Endothelial cell of umbilical vein (primary cell): ENCODE measurements at regions of chr1 and their contacts with region 1.

Region 1: DNA sequence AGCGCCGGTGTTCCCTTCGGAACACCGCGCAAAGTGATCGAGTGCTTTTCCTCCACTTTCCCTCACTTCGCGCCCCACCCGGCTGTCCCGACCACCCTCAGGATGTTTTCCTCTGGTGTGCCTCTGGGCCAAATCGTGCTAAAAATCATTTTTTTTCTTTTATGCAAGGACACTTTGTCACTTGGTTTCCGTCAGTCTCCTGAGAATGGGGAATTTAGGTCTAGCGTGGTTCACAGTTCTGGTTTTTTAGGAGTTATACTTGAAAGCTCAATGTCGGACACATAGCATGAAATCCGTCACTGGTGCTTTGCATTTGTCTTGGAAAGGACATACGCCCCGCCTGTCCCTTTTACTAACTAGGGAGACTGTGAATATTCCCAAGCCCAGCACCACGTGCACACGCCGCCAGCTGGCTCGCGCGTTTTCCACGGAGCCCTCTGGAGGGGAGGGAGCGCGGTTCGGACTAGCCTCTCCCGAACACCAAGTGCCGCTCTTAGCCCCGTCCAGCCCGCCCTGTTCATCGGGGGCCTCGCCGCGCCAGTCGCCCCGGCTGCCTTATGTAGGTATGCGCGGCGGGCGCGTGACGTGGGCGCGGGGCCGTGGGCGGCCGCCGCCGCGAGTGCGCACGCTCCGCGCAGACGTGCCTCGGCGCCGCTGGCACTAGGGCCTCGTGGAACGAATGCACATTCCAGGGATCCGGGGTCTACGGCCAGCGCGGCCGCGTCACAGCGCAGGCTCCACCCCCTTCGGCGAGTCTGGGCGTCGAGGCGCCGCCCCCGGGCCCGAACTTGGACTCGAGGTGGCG is 572 bp upstream of the IRF2BP2 start:
- DNase-seq: peak; percentile 95
- H3K4me3 ChIP-seq: peak overlapping the region; percentile 17 to 78 (median 57)
- H3K27ac ChIP-seq: peak overlapping the region; percentile 99
- H3K4me1 ChIP-seq: peaks cover 37% of the 10 kb centered on the region
- H3K27me3 ChIP-seq: no peaks in the 10 kb centered on the region
- CTCF ChIP-seq: peak in 1 of 2 donors; percentile 14
- POLR2A ChIP-seq: peak; percentile 10

Region 2: GRCh38 chr1:234599617-234600417 is 10.7 kb before region 1 on chr1:
- CTCF ChIA-PET with region 1: interaction called, 14 read pairs
- POLR2A ChIA-PET with region 1: no interaction called
- dilution Hi-C with region 1: no loop called
- intact Hi-C with region 1: loop called (anchors 1 kb)
- DNase-seq: peak; percentile 92
- H3K4me3 ChIP-seq: peak overlapping the region; percentile 18 to 53 (median 32)
- H3K27ac ChIP-seq: peak overlapping the region; percentile 87
- H3K4me1 ChIP-seq: peaks cover 50% of the 10 kb centered on the region
- H3K27me3 ChIP-seq: no peaks in the 10 kb centered on the region
- CTCF ChIP-seq: peak in 1 of 2 donors; percentile 3
- POLR2A ChIP-seq: no peak

Region 3: GRCh38 chr1:234656856-234657654 is 46.5 kb after region 1 on chr1:
- CTCF ChIA-PET with region 1: interaction called, 4 read pairs
- POLR2A ChIA-PET with region 1: interaction called, 3 read pairs
- dilution Hi-C with region 1: no loop called
- intact Hi-C with region 1: loop called (anchors 1 kb)
- DNase-seq: peak; percentile 92
- H3K4me3 ChIP-seq: no peak overlapping the region
- H3K27ac ChIP-seq: peak overlapping the region; percentile 82
- H3K4me1 ChIP-seq: peaks cover 33% of the 10 kb centered on the region
- H3K27me3 ChIP-seq: no peaks in the 10 kb centered on the region
- CTCF ChIP-seq: no peak
- POLR2A ChIP-seq: no peak

Region 4: GRCh38 chr1:234772345-234773147 is 162.0 kb after region 1 on chr1:
- CTCF ChIA-PET with region 1: interaction called, 3 read pairs
- POLR2A ChIA-PET with region 1: no interaction called
- dilution Hi-C with region 1: no loop called
- intact Hi-C with region 1: loop called (anchors 1 kb)
- DNase-seq: peak; percentile 91
- H3K4me3 ChIP-seq: no peak overlapping the region
- H3K27ac ChIP-seq: peak overlapping the region; percentile 89
- H3K4me1 ChIP-seq: peaks cover 12% of the 10 kb centered on the region
- H3K27me3 ChIP-seq: peaks cover 2% of the 10 kb centered on the region in 2 experiments
- CTCF ChIP-seq: no peak
- POLR2A ChIP-seq: peak; percentile 62

Region 5: GRCh38 chr1:234893725-234894630 is 283.4 kb after region 1 on chr1:
- CTCF ChIA-PET with region 1: interaction called, 3 read pairs
- POLR2A ChIA-PET with region 1: no interaction called
- dilution Hi-C with region 1: no loop called
- intact Hi-C with region 1: loop called (anchors 1 kb)
- DNase-seq: peak; percentile 98
- H3K4me3 ChIP-seq: no peak overlapping the region
- H3K27ac ChIP-seq: peak overlapping the region; percentile 93
- H3K4me1 ChIP-seq: peaks cover 20% of the 10 kb centered on the region
- H3K27me3 ChIP-seq: no peaks in the 10 kb centered on the region
- CTCF ChIP-seq: no peak
- POLR2A ChIP-seq: no peak

Region 6: GRCh38 chr1:234978397-234979295 is 368.1 kb after region 1 on chr1:
- CTCF ChIA-PET with region 1: interaction called, 7 read pairs
- POLR2A ChIA-PET with region 1: no interaction called
- dilution Hi-C with region 1: loop called (anchors 25 kb)
- intact Hi-C with region 1: loop called (anchors 1 kb)
- DNase-seq: peak; percentile 86
- H3K4me3 ChIP-seq: no peak overlapping the region
- H3K27ac ChIP-seq: peak overlapping the region; percentile 88
- H3K4me1 ChIP-seq: peaks cover 69% of the 10 kb centered on the region
- H3K27me3 ChIP-seq: no peaks in the 10 kb centered on the region
- CTCF ChIP-seq: no peak
- POLR2A ChIP-seq: no peak

Region 7: DNA sequence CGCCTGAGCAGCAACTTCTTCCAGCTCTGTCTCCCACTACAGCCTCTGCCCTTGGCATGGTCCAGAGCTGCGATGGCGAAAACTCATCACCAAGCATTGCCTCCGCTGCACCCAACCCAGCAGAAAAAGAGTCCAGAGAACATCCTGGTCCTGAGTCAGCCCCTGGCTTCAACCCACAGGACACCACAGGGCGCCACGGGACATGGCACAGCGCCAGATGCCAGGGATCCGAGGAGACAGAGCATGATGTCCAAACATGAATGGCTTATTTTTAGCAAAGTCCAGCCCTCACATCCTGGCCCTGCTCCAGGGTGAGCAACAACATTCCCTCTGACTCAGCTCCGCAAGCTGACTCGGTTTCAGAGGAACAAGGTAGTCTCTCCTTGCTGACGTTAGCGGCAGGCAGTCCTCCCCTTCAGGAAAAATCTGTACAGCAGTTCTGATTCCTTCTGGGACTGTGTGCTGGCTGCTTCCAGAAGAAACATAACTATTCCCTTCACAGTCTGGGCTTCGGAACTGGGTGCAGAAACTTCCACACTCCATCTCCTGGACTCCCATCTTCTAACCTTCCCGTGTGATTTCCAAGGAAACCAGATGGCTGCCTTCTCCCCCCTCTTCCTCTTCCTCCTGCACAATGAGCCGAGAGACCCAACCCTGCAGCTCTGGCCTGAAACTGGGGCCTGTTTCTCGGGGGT is 386.8 kb after region 1 on chr1:
- CTCF ChIA-PET with region 1: no interaction called
- POLR2A ChIA-PET with region 1: no interaction called
- dilution Hi-C with region 1: loop called (anchors 25 kb)
- intact Hi-C with region 1: loop called (anchors 1 kb)
- DNase-seq: peak; percentile 99
- H3K4me3 ChIP-seq: no peak overlapping the region
- H3K27ac ChIP-seq: peak overlapping the region; percentile 95
- H3K4me1 ChIP-seq: peaks cover 28% of the 10 kb centered on the region
- H3K27me3 ChIP-seq: no peaks in the 10 kb centered on the region
- CTCF ChIP-seq: no peak
- POLR2A ChIP-seq: peak; percentile 58